Uterus (tissue), 4 donors: ENCODE measurements at regions of chr5 and their contacts with region 1.

Region 1: GRCh38 chr5:179974946-179975712 is 67.4 kb upstream of the TBC1D9B start:
- DNase-seq: no peak
- H3K4me3 ChIP-seq: no peak overlapping the region
- H3K27ac ChIP-seq: no peak overlapping the region
- H3K4me1 ChIP-seq: no peaks in the 10 kb centered on the region
- H3K27me3 ChIP-seq: no peaks in the 10 kb centered on the region
- CTCF ChIP-seq: peak in 3 of 4 experiments; percentile 10 to 22 (median 22)
- POLR2A ChIP-seq: no peak

Region 2: DNA sequence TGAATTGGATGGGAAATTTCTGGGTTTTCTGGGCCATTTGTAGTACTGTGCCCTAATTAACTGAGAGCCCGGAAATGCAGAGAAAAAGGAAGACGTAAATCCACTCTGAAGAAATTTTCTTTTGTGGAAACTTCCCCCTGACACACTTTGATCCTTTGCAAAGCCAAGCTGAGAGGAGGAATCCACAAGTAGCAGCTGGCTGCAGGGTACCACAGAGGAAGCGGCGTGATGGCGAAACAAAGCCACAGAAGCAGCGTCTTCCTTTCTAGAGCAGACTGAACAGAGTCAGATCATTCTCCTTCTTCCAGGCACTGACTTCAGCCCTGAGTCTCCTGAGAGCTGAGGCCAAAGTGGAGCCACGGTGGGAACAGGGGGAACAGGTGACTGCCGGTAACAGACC is 1197.6 kb before region 1 on chr5:
- intact Hi-C with region 1: loop called (anchors 10 kb)
- DNase-seq: no peak
- H3K4me3 ChIP-seq: no peak overlapping the region
- H3K27ac ChIP-seq: no peak overlapping the region
- H3K4me1 ChIP-seq: no peaks in the 10 kb centered on the region
- H3K27me3 ChIP-seq: no peaks in the 10 kb centered on the region
- CTCF ChIP-seq: no peak
- POLR2A ChIP-seq: no peak

Region 3: GRCh38 chr5:179839328-179840256 is 135.5 kb before region 1 on chr5:
- intact Hi-C with region 1: no loop called
- DNase-seq: no peak
- H3K4me3 ChIP-seq: no peak overlapping the region
- H3K27ac ChIP-seq: no peak overlapping the region
- H3K4me1 ChIP-seq: no peaks in the 10 kb centered on the region
- H3K27me3 ChIP-seq: no peaks in the 10 kb centered on the region
- CTCF ChIP-seq: no peak
- POLR2A ChIP-seq: no peak